Vagina (tissue), 2 donors: ENCODE measurements at regions of chr11 and their contacts with region 1.

Region 1: GRCh38 chr11:62108017-62108750 is 15.6 kb upstream of the INCENP start:
- DNase-seq: peak in 1 of 2 donors; percentile 87
- H3K4me3 ChIP-seq: no peak overlapping the region
- H3K27ac ChIP-seq: no peak overlapping the region
- H3K4me1 ChIP-seq: peaks cover 30% of the 10 kb centered on the region
- H3K27me3 ChIP-seq: no peaks in the 10 kb centered on the region
- CTCF ChIP-seq: peak; percentile 61 to 79 (median 64)
- POLR2A ChIP-seq: no peak

Region 2: DNA sequence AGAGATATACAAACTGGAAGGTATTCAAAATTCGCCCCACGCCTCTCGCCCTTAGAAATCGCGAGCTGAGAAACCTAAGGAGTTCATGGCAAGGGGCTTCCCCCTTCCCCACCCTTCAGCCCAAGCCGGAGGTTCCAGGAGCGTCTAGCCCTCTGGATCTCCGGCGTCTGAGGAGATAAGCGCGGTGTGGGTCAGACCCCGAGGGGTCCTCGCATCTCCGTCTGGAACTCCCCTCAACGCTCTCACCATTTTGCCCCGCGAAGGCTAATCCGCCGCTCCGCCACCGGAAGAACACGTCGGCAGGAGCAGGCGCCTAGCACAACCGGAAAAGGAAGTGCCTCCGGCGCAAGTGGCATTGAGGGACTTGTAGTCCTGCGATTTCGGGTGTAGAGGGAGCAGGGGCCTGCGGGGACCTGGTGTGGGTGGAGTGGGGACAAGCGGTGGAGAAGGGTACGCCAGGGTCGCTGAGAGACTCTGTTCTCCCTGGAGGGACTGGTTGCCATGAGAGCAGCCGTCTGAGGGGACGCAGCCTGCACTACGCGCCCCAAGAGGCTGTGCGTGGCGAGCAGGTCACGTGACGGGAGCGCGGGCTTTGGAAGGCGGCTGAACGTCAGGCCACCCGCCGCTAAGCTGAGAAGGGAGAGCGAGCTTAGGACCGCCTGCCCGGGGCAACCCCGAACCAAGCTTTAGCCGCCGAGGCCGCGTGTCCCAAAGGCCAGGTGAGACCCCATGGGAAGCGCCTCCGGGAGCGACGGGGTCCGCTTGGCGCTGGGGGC is 315.7 kb before region 1 on chr11 and contains the starts of genes FEN1 and TMEM258:
- intact Hi-C with region 1: loop called (anchors 10 kb)
- DNase-seq: peak in 1 of 2 donors; percentile 96
- H3K4me3 ChIP-seq: peak within 1 kb of the TSS; percentile 79 to 84
- H3K27ac ChIP-seq: peak within 1 kb of the TSS; percentile 96
- H3K4me1 ChIP-seq: peaks cover 37% of the 10 kb centered on the region
- H3K27me3 ChIP-seq: no peaks in the 10 kb centered on the region
- CTCF ChIP-seq: no peak
- POLR2A ChIP-seq: peak in 1 of 2 donors; percentile 52
- total RNA-seq, gene FEN1: 9.6 TPM
- total RNA-seq, gene TMEM258: 47.9 TPM

Region 3: GRCh38 chr11:61871158-61871597 is 237.0 kb before region 1 on chr11:
- intact Hi-C with region 1: loop called (anchors 10 kb)
- DNase-seq: no peak
- H3K4me3 ChIP-seq: peak overlapping the region in 1 of 2 donors; percentile 14
- H3K27ac ChIP-seq: peak overlapping the region; percentile 46
- H3K4me1 ChIP-seq: peaks cover 12% of the 10 kb centered on the region
- H3K27me3 ChIP-seq: no peaks in the 10 kb centered on the region
- CTCF ChIP-seq: peak; percentile 76 to 91 (median 76)
- POLR2A ChIP-seq: no peak

Region 4: DNA sequence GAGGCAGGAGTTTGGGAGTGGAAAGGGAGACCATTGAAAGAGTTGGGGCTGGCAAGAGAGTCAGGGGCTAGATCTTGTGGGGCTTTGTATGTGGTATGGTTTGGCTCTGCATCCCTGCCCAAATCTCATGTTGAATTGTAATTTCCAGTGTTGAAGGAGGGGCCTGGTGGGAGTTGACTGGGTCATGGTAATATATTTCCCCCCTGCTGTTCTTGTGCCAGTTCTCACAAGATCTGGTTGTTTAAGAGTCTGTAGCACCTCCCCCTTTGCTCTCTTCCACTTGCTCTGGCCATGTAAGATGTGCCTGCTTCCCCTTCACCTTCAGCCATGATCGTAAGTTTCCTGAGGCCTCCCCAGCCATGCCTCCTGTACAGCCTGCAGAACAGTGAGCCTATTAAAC is 180.7 kb before region 1 on chr11:
- intact Hi-C with region 1: no loop called
- DNase-seq: no peak
- H3K4me3 ChIP-seq: no peak overlapping the region
- H3K27ac ChIP-seq: no peak overlapping the region
- H3K4me1 ChIP-seq: peaks cover 22% of the 10 kb centered on the region
- H3K27me3 ChIP-seq: no peaks in the 10 kb centered on the region
- CTCF ChIP-seq: no peak
- POLR2A ChIP-seq: no peak

Region 5: GRCh38 chr11:62025487-62026105 is 82.6 kb before region 1 on chr11:
- intact Hi-C with region 1: no loop called
- DNase-seq: peak in 1 of 2 donors; percentile 94
- H3K4me3 ChIP-seq: no peak overlapping the region
- H3K27ac ChIP-seq: peak overlapping the region; percentile 45
- H3K4me1 ChIP-seq: peaks cover 7% of the 10 kb centered on the region
- H3K27me3 ChIP-seq: no peaks in the 10 kb centered on the region
- CTCF ChIP-seq: no peak
- POLR2A ChIP-seq: no peak